ENCODE measurements at regions of chr9 and their contacts with region 1.

Region 1: GRCh38 chr9:69121828-69122548 is 52.1 kb upstream of the TJP2 start:
- DNase-seq: no peak
- ATAC-seq: peak; percentile 61 to 72
- H3K4me3 ChIP-seq: peak overlapping the region; percentile 53 to 88 (median 74)
- H3K27ac ChIP-seq: peak overlapping the region; percentile 1 to 73 (median 68)
- H3K4me1 ChIP-seq: peaks cover 0 to 10% of the 10 kb centered on the region in 2 donors
- H3K27me3 ChIP-seq: no peaks in the 10 kb centered on the region
- CTCF ChIP-seq: no peak
- POLR2A ChIP-seq: no peak

Region 2: DNA sequence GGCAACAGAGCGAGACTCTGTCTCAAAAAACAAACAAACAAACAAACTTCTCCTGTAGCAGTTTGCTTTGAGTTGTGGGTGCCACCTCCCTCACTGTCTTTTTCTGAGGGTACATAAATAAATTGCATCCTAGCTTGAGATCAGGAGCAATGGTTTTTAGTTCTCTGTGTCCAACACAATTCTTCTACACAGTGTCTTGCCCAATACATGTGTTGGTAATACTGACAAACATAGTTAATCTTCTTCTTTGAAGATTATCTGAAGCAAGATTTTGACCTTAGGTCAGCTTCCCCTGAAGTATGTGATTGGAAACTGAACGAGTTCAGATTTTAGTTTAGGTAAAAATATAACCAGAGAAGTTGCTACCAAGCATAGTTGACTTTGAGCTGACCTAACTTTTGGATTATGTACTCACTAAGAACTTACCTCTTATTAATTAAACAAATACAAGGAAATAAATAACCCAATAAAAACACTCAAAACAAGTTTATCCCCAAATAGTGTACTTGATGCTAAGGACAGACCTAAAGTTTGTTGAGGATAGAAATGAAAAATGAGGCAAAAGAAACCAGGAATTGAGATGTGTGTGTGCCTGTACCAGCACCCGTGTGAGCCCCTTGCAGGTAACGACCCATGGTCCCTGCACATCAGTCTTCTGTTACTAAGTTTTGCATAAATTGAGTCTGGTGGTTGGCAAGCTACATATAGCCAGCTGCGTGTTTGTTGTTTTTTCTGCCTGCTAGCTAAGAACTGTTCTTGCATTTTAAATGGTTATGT is 68.3 kb after region 1 on chr9:
- in situ Hi-C with region 1: no loop called
- intact Hi-C with region 1: loop called (anchors 2 kb)
- DNase-seq: no peak
- ATAC-seq: no peak
- H3K4me3 ChIP-seq: no peak overlapping the region
- H3K27ac ChIP-seq: no peak overlapping the region
- H3K4me1 ChIP-seq: peaks cover 21 to 34% of the 10 kb centered on the region in 2 donors
- H3K27me3 ChIP-seq: no peaks in the 10 kb centered on the region
- CTCF ChIP-seq: no peak
- POLR2A ChIP-seq: no peak

Measured in gastrocnemius medialis (tissue), 4 donors.